Activated CD8-positive, alpha-beta T cell treated with anti-CD3 and anti-CD28 coated beads, Interleukin-2, amount 10 ng/mL, durations not matched to agents 7 days and 5 days (primary cell): ENCODE measurements at regions of chr12 and their contacts with region 1.

Region 1: GRCh38 chr12:100234598-100235304 is 32.1 kb downstream of the DEPDC4 start:
- DNase-seq: peak; percentile 26
- ATAC-seq: no peak
- H3K4me3 Mint-ChIP-seq: no peak overlapping the region
- H3K27ac Mint-ChIP-seq: no peak overlapping the region
- H3K4me1 Mint-ChIP-seq: no peaks in the 10 kb centered on the region
- H3K27me3 Mint-ChIP-seq: no peaks in the 10 kb centered on the region

Region 2: DNA sequence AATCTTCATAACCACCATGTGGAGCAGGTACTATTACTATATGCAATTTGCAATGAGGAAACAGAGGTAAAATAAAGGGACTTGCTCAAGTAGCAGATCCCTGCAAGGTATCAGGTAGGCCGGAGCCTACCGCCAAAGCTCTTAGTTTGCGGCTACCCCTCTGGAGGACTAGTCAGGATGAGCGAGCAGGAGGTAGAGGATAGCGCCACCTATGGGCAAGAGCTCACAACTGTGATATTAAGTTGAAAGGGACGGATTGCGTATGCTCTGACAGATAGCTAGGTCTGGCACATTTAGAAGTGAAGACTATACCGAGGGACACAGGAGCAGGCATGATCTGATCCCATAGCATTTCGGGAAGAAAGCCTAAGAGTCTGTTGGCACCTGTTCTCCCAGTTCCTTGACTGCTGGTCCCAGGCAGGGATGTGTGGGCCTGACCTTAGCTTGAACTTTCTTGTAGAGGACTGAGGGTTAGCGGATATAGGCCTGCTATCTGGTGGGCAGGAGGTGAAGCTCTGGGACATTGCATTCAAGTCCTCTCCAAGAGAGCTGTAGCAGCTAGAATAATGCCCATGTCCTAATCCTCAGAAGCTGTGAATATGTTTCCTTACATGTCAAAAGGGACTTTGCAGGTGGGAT is 170.1 kb after region 1 on chr12:
- CTCF ChIA-PET with region 1: interaction called, 24 read pairs
- POLR2A ChIA-PET with region 1: no interaction called
- DNase-seq: peak; percentile 50
- ATAC-seq: peak; percentile 51
- H3K4me3 Mint-ChIP-seq: no peak overlapping the region
- H3K27ac Mint-ChIP-seq: no peak overlapping the region
- H3K4me1 Mint-ChIP-seq: no peaks in the 10 kb centered on the region
- H3K27me3 Mint-ChIP-seq: peaks cover 10% of the 10 kb centered on the region

Region 3: GRCh38 chr12:100554608-100555077 is 319.9 kb after region 1 on chr12:
- CTCF ChIA-PET with region 1: interaction called, 11 read pairs
- POLR2A ChIA-PET with region 1: interaction called, 3 read pairs
- DNase-seq: no peak
- ATAC-seq: no peak
- H3K4me3 Mint-ChIP-seq: no peak overlapping the region
- H3K27ac Mint-ChIP-seq: no peak overlapping the region
- H3K4me1 Mint-ChIP-seq: no peaks in the 10 kb centered on the region
- H3K27me3 Mint-ChIP-seq: no peaks in the 10 kb centered on the region